IMR-90 (cell line): ENCODE measurements at regions of chr9 and their contacts with region 1.

Region 1: DNA sequence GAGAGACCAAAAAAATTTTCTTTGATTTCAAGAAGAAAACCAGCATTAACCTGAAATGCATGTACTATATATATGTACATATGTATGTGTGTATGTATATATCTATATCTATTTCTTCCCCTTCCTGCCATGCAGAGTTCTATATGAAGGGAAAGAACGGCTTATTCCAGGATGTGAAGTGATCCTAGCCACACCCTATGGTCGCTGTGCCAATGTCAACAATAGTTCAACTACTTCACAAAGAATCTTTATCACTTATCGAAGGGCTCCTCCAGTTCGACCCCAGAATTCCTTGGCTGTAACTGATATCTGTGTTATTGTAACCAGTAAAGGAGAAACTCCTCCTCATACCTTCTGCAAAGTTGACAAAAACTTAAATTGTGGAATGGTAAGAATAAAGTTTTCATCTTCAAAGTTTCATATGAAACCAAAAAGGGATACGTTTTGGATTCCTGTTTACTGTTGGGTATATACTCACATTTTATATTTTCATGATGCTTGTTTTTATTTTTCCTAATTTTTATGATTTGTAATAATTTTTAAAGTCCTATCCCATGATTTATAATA is 56.2 kb downstream of the DENND4C start:
- DNase-seq: peak; percentile 16
- ATAC-seq: no peak
- H3K4me3 ChIP-seq: no peak overlapping the region
- H3K27ac ChIP-seq: no peak overlapping the region
- H3K4me1 ChIP-seq: no peaks in the 10 kb centered on the region
- H3K27me3 ChIP-seq: no peaks in the 10 kb centered on the region
- CTCF ChIP-seq: no peak
- POLR2A ChIP-seq: no peak
- RAD21 ChIP-seq: no peak

Region 2: GRCh38 chr9:19358701-19359100 is 72.0 kb after region 1 on chr9:
- CTCF ChIA-PET with region 1: no interaction called
- POLR2A ChIA-PET with region 1: no interaction called
- dilution Hi-C with region 1: no loop called
- in situ Hi-C with region 1: no loop called
- intact Hi-C with region 1: loop called (anchors 10 kb)
- DNase-seq: peak; percentile 42
- ATAC-seq: peak; percentile 21; the same call in 1 of the 2 replicates
- H3K4me3 ChIP-seq: no peak overlapping the region
- H3K27ac ChIP-seq: no peak overlapping the region
- H3K4me1 ChIP-seq: no peaks in the 10 kb centered on the region
- H3K27me3 ChIP-seq: no peaks in the 10 kb centered on the region
- CTCF ChIP-seq: no peak
- POLR2A ChIP-seq: no peak
- RAD21 ChIP-seq: no peak